Mammary epithelial cell (primary cell): ENCODE measurements at regions of chr16 and their contacts with region 1.

Region 1: GRCh38 chr16:67514382-67514828 is 14.2 kb upstream of the RIPOR1 start:
- DNase-seq: peak; percentile 75
- H3K4me3 ChIP-seq: no peak overlapping the region
- H3K27ac ChIP-seq: no peak overlapping the region
- H3K4me1 ChIP-seq: peaks cover 8% of the 10 kb centered on the region
- H3K27me3 ChIP-seq: no peaks in the 10 kb centered on the region
- CTCF ChIP-seq: peak; percentile 52 to 67

Region 2: GRCh38 chr16:66954097-66954659 is 560.2 kb before region 1 on chr16:
- CTCF ChIA-PET with region 1: no interaction called
- dilution Hi-C with region 1: no loop called
- in situ Hi-C with region 1: no loop called
- intact Hi-C with region 1: loop called (anchors 10 kb)
- DNase-seq: peak; percentile 68
- H3K4me3 ChIP-seq: no peak overlapping the region
- H3K27ac ChIP-seq: no peak overlapping the region
- H3K4me1 ChIP-seq: peaks cover 16% of the 10 kb centered on the region
- H3K27me3 ChIP-seq: no peaks in the 10 kb centered on the region
- CTCF ChIP-seq: peak; percentile 83 to 86

Region 3: GRCh38 chr16:67428146-67428731 is 86.2 kb before region 1 on chr16:
- CTCF ChIA-PET with region 1: interaction called, 3 read pairs
- dilution Hi-C with region 1: no loop called
- in situ Hi-C with region 1: no loop called
- intact Hi-C with region 1: loop called (anchors 1 kb)
- DNase-seq: peak; percentile 39
- H3K4me3 ChIP-seq: no peak overlapping the region
- H3K27ac ChIP-seq: no peak overlapping the region
- H3K4me1 ChIP-seq: peaks cover 13% of the 10 kb centered on the region
- H3K27me3 ChIP-seq: peaks cover 2% of the 10 kb centered on the region
- CTCF ChIP-seq: peak; percentile 81 to 97

Region 4: DNA sequence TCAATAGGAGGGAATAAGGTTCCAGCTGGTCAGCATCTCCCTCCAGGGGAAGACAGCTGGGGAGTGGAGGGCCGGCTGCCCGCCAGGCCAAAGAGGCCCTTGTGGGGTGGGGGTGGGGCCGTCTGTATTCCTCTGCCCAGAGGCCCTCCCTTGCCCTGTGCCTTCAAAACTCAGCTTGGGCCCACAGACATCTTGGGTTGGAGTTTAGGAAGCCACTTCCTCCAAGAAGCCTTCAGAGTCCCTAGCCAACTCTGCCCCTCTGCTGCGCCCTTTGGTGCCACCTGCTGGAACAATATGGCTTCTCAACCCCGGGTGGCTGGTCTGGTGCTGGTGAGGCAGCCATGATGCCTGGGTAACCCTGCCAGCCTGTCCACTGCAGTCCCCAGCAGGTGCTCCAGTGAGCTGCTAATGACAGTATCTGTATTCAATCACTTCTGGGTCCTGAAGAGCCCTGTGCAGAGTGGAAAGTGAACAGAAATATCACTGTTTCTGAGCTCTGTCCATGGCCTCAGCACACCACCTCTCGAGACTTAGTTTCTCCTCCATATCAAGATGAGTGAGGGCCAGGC is 66.8 kb before region 1 on chr16:
- CTCF ChIA-PET with region 1: no interaction called
- dilution Hi-C with region 1: no loop called
- in situ Hi-C with region 1: no loop called
- intact Hi-C with region 1: no loop called
- DNase-seq: no peak
- H3K4me3 ChIP-seq: no peak overlapping the region
- H3K27ac ChIP-seq: no peak overlapping the region
- H3K4me1 ChIP-seq: no peaks in the 10 kb centered on the region
- H3K27me3 ChIP-seq: no peaks in the 10 kb centered on the region
- CTCF ChIP-seq: peak; percentile 47 to 48

Region 5: DNA sequence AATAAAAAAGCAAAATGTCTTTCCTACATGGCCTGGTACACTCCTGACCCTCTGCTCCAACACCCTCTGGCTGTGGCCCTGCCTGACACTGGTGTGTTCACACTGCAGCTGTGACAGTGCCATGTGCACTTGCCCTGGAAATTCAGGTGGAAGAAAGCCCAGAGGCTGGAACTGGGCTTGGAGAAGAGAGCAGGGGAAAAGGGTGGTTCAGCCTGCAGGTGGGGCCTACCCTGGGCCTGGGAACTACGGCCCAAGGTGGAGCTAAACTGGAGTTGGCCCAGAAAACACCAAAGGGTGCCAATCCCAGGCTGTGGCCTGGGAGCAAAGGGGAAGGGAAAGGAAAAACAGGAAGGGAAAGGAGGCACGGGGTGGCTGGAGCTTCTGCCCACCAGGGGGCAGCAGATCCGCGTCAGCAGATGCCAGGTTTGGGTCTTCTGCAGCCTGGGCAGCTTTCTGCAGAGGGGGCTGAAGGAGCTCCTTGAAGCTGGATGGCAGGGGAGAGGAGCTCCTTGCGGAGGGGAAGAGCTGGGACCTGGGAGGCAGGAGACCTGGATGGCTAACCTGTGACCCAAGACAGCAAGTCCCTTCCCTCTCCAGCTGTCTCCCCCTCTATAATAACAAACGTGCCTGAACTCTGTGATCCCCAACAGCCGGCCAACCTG is 32.5 kb after region 1 on chr16:
- CTCF ChIA-PET with region 1: no interaction called
- dilution Hi-C with region 1: no loop called
- in situ Hi-C with region 1: no loop called
- intact Hi-C with region 1: no loop called
- DNase-seq: peak; percentile 45
- H3K4me3 ChIP-seq: no peak overlapping the region
- H3K27ac ChIP-seq: no peak overlapping the region
- H3K4me1 ChIP-seq: peaks cover 26% of the 10 kb centered on the region
- H3K27me3 ChIP-seq: no peaks in the 10 kb centered on the region
- CTCF ChIP-seq: peak; percentile 93 to 94